ENCODE measurements at regions of chr15 and their contacts with region 1.

Region 1: DNA sequence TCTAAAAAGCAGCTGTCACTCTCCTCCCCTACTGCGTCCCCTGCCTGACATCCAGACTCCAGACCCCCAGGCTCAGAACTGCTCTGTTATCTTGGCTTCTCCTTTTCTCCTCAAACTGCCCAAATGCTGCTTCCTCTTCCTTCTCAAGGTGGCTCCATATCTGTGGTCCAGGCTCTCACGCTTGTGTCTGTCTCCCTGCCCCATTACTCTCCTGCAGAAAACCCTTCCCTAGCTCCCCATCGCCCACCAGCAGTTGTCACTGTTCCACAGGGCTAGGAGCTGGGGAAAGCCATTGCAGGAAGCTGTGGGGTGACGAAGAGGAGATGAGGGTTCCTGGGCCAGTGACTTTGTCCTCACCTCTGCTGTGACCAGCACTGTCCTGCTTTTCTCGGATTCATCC is 30.7 kb upstream of the CGNL1 start:
- DNase-seq: no peak
- H3K4me3 ChIP-seq: no peak overlapping the region
- CTCF ChIP-seq: no peak
- POLR2A ChIP-seq: no peak

Region 2: GRCh38 chr15:57534281-57534680 is 188.7 kb after region 1 on chr15:
- intact Hi-C with region 1: loop called (anchors 5 kb)
- DNase-seq: no peak
- H3K4me3 ChIP-seq: no peak overlapping the region
- CTCF ChIP-seq: no peak
- POLR2A ChIP-seq: no peak